ENCODE measurements at regions of chr19 and their contacts with region 1.

Region 1: GRCh38 chr19:11482384-11483050 is 1.7 kb upstream of the ELAVL3 start:
- DNase-seq: peak; percentile 97

Region 2: GRCh38 chr19:11380653-11381534 is 101.6 kb before region 1 on chr19:
- intact Hi-C with region 1: loop called in 1 of 2 experiments (anchors 10 kb)
- DNase-seq: peak; percentile 97

Region 3: DNA sequence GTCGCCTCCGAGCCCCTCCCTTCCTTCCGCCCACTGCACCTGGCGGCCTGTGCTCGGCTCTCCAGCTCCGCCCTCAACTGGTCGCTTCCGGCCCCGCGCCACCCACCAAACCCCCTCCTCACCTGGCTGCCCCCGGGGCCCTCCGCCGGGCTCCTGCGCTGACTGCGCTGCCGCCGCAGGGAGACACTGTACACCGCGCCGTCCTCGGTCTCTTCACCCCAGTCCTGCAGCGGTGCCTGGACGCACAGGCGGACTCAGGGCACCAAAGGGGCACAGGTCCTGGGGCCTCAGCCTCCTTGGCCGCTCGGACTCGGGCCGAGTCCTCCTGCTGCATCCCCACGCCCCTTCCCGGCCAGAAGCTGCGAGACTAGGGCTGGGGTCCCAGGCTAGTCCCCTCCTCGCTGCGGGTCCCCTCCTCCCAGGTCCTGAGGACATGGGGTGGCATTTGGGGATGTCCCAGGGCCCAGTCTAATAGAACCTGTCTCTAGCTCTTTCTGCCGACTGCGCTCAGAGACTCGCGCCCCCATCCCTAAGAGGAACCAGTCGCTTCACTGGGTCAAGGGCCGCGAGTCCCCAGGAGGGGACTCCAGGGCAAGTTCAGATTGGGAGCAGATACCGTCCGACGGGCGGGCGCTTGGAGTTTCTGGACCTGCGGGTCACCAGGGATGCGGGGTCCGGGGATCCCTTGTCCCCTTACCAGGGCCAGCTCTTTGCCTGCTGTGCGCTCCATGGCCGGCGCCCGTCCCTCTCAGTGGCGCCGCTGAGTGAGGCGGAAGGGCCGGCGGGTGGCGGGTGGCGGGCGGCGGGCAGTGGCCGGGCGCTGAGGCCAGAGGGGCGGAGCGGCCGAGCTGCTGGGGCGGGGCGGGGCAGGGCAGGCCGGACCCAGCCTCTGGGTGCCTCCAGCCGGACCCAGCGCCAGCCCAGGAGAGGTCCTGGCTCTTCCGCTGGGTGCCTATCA is 63.7 kb before region 1 on chr19 and contains the start of gene RGL3:
- intact Hi-C with region 1: no loop called
- DNase-seq: no peak
- total RNA-seq, gene RGL3: 7.7 to 12.9 TPM

Measured in posterior vena cava (tissue), 2 donors.